ENCODE measurements at regions of chr4 and their contacts with region 1.

Region 1: DNA sequence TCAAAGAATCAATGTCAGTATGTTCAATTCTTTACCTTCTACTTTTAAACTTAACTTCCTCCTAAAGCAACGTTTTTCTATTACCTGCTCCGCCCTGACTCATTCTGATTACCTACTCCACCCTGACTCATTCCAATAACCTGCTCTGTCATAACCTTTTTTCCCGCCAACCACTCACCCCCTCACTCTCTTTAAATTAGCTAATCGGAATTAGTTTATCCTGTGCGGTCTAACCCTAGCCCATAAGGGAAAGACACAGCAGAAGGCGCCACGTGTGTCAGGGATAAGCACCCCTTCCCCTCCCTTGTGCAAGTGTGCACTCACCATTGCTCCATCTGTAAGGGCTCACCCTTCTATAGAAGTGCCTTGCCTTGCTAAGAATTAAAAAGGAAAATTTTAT is 64.4 kb downstream of the EIF4E start:
- DNase-seq: peak; percentile 79
- H3K4me3 Mint-ChIP-seq: no peak overlapping the region
- H3K27ac Mint-ChIP-seq: peak overlapping the region; percentile 42
- H3K4me1 Mint-ChIP-seq: peaks cover 13% of the 10 kb centered on the region
- H3K27me3 Mint-ChIP-seq: no peaks in the 10 kb centered on the region

Region 2: DNA sequence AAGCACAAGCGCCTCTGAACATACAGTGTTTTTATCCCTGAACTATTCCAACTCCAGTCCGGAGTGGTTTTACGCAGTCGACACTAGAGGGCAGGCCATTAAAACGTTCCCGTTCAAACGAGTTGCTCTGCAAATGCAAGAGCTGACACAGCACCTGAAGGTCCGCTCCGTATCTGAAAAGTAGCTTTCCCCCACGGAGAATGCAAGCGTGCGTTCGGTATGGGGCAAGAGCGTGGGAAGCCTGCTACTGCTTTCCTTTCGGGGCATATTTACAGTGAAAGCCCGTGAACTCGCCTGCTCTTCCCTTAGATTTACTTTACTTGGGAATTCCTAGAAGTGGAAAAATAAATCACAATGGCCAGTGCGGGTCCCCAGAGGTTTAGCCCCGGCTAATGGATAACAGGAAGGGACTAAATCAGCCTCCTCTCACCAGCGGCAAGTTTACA is 396.9 kb before region 1 on chr4:
- CTCF ChIA-PET with region 1: no interaction called
- POLR2A ChIA-PET with region 1: no interaction called
- intact Hi-C with region 1: loop called (anchors 2 kb)
- DNase-seq: peak; percentile 82
- H3K4me3 Mint-ChIP-seq: peak overlapping the region; percentile 67
- H3K27ac Mint-ChIP-seq: no peak overlapping the region
- H3K4me1 Mint-ChIP-seq: peaks cover 27% of the 10 kb centered on the region
- H3K27me3 Mint-ChIP-seq: no peaks in the 10 kb centered on the region

Region 3: DNA sequence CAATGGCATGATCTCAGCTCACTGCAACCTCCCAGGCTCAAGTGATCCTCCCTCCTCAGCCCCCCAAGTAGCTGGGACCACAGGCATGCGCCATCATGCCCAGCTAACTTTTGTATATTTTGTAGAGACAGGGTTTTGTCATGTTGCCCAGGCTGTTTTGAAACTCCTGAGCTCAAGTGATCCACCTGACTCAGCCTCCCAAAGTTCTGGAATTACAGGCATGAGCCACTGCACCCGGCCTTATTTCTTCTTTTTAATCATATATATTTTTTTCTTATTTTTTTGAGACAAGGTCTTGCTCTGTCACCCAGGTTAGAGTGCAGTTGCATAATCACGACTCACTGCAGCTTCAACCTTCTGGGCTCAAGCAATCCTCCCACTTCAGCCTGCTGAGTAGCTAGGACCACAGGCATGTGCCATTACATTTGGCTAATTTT is 390.1 kb before region 1 on chr4:
- CTCF ChIA-PET with region 1: no interaction called
- POLR2A ChIA-PET with region 1: no interaction called
- intact Hi-C with region 1: loop called (anchors 2 kb)
- DNase-seq: peak; percentile 56
- H3K4me3 Mint-ChIP-seq: no peak overlapping the region
- H3K27ac Mint-ChIP-seq: no peak overlapping the region
- H3K4me1 Mint-ChIP-seq: peaks cover 49% of the 10 kb centered on the region
- H3K27me3 Mint-ChIP-seq: no peaks in the 10 kb centered on the region

Region 4: DNA sequence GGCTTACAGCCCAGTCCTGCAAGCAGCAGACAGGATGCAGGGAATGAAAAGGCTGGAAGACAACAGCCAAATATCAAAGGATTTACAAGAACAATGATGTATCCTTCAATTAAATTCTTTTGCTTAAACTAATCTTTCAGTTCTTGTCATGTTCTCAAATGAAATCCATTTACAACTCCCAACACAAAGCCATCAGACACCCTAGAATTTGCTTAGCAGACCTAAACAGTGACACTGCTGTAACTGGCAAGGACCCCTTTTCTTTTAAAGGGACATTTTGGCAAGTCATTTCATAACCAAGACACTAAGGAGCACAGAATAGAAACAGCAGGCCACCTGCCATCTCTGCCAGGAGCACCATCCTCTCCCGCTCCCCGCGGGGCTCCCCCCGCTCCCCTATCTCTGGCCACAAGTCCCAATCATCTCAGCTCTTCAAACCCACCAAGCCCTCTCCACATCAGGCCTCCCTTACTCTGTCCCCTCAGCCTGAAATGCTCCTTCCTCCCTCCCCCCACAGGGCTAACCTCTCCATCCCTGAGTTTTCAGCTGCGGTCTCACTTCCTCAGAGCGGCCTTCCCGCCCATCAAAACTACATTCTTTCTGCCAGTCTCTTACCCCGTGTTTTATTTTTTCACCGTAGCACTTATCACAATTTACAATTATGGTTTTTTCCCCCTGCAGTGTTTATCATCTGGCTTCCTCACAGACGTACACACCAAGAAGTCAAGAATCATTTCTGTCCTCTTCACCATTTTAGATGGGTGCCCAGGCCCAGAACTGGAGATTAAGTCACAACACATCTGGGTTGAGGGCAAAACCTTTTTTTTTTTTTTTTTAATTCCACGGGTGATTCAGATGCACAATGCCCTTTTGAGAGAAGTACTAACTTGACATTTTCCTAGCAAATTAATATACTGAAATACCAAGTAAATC is 252.0 kb before region 1 on chr4:
- CTCF ChIA-PET with region 1: no interaction called
- POLR2A ChIA-PET with region 1: no interaction called
- intact Hi-C with region 1: no loop called
- DNase-seq: no peak
- H3K4me3 Mint-ChIP-seq: no peak overlapping the region
- H3K27ac Mint-ChIP-seq: no peak overlapping the region
- H3K4me1 Mint-ChIP-seq: peaks cover 64% of the 10 kb centered on the region
- H3K27me3 Mint-ChIP-seq: no peaks in the 10 kb centered on the region